HepG2 (cell line): ENCODE measurements at regions of chr1 and their contacts with region 1.

Region 1: DNA sequence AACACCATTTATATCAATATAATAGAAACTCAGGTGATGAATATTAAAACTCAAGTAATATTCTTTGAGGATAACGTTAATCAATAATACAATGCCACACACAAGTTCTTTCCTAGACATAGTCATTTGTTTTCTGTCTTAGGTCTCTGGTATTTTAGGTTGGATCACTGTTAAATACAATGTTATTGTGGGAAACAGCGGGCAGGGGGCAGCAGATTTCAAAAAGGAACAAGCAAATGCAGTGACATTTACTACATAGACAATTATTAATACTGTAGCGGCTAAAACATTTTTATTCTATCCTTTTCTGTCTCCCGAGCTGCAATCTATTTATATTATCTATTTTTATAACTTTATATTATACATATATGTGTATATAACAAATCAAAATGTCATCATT is 186.4 kb upstream of the ZNHIT6 start:
- DNase-seq: peak; percentile 25
- ATAC-seq: peak; percentile 63; the same call in 2 of the 3 replicates
- H3K4me3 ChIP-seq: no peak overlapping the region
- H3K27ac ChIP-seq: no peak overlapping the region
- H3K4me1 ChIP-seq: no peaks in the 10 kb centered on the region
- H3K27me3 ChIP-seq: no peaks in the 10 kb centered on the region
- CTCF ChIP-seq: peak; percentile 44
- EP300 ChIP-seq: no peak
- POLR2A ChIP-seq: no peak
- RAD21 ChIP-seq: no peak

Region 2: DNA sequence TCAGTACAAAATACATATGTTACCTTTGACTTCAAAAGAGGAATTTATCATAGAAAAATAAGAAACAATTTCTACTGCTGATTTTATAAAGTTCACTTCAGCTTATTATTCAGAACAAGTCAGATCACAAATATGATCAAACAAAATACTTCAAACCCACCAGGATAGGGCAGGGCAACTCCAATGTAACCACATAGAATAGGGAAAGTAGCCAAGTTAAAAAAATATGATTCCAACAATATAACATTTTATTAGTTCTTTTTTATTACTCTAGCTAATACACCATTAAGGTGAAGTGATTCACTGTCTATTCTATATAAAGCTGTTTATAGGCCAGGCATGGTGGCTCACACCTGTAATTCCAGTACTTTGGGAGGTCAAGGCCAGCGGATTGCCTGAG is 131.8 kb before region 1 on chr1:
- CTCF ChIA-PET with region 1: no interaction called
- POLR2A ChIA-PET with region 1: no interaction called
- in situ Hi-C with region 1: no loop called
- intact Hi-C with region 1: no loop called
- DNase-seq: no peak
- ATAC-seq: no peak
- H3K4me3 ChIP-seq: no peak overlapping the region
- H3K27ac ChIP-seq: no peak overlapping the region
- H3K4me1 ChIP-seq: no peaks in the 10 kb centered on the region
- H3K27me3 ChIP-seq: no peaks in the 10 kb centered on the region; a peak in 1 of 5 replicates
- CTCF ChIP-seq: no peak
- EP300 ChIP-seq: no peak
- POLR2A ChIP-seq: no peak
- RAD21 ChIP-seq: no peak

Region 3: GRCh38 chr1:86018283-86018923 is 123.8 kb after region 1 on chr1:
- CTCF ChIA-PET with region 1: no interaction called
- POLR2A ChIA-PET with region 1: no interaction called
- in situ Hi-C with region 1: no loop called
- intact Hi-C with region 1: loop called (anchors 1 kb)
- DNase-seq: peak; percentile 10
- ATAC-seq: peak; percentile 67; the same call in 2 of the 3 replicates
- H3K4me3 ChIP-seq: no peak overlapping the region
- H3K27ac ChIP-seq: no peak overlapping the region
- H3K4me1 ChIP-seq: no peaks in the 10 kb centered on the region
- H3K27me3 ChIP-seq: no peaks in the 10 kb centered on the region
- CTCF ChIP-seq: peak; percentile 51
- EP300 ChIP-seq: no peak
- POLR2A ChIP-seq: no peak
- RAD21 ChIP-seq: no peak

Region 4: DNA sequence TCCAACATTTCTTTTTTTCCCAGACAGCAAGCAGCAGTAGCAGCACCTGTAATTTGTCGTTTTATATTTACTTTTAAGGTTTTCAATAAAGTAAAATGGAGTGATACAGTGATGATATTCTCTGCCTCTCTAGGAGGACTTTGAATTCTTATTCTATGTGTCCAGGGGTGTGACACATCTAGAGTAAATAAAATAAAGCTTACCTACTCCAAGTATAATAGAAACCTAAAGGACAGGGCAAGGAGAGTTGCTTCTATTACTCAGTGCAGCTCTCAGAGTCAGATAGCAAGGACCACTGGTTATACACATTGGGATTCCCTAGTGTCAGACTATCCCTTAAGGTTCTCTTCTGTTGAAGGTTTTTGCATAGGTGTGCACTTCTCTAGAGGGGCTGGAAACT is 1529.9 kb after region 1 on chr1:
- CTCF ChIA-PET with region 1: no interaction called
- POLR2A ChIA-PET with region 1: no interaction called
- in situ Hi-C with region 1: no loop called
- intact Hi-C with region 1: loop called (anchors 5 kb)
- DNase-seq: no peak
- ATAC-seq: no peak
- H3K4me3 ChIP-seq: no peak overlapping the region
- H3K27ac ChIP-seq: no peak overlapping the region
- H3K4me1 ChIP-seq: no peaks in the 10 kb centered on the region
- H3K27me3 ChIP-seq: no peaks in the 10 kb centered on the region
- CTCF ChIP-seq: no peak
- EP300 ChIP-seq: no peak
- POLR2A ChIP-seq: no peak
- RAD21 ChIP-seq: no peak